Aorta (tissue), 5 donors: ENCODE measurements at regions of chr7 and their contacts with region 1.

Region 1: GRCh38 chr7:18086165-18087030 is 58.8 kb upstream of the PRPS1L1 start:
- DNase-seq: peak; percentile 66 to 89
- ATAC-seq: peak; percentile 61
- H3K4me3 ChIP-seq: peak overlapping the region; percentile 79 to 81
- H3K27ac ChIP-seq: no peak overlapping the region
- H3K4me1 ChIP-seq: no peaks in the 10 kb centered on the region
- H3K27me3 ChIP-seq: no peaks in the 10 kb centered on the region

Region 2: GRCh38 chr7:18128846-18129245 is 42.4 kb after region 1 on chr7:
- intact Hi-C with region 1: no loop called
- DNase-seq: no peak
- ATAC-seq: no peak
- H3K4me3 ChIP-seq: no peak overlapping the region
- H3K27ac ChIP-seq: no peak overlapping the region
- H3K4me1 ChIP-seq: peaks cover 0 to under 1% of the 10 kb centered on the region in 2 donors
- H3K27me3 ChIP-seq: no peaks in the 10 kb centered on the region

Region 3: DNA sequence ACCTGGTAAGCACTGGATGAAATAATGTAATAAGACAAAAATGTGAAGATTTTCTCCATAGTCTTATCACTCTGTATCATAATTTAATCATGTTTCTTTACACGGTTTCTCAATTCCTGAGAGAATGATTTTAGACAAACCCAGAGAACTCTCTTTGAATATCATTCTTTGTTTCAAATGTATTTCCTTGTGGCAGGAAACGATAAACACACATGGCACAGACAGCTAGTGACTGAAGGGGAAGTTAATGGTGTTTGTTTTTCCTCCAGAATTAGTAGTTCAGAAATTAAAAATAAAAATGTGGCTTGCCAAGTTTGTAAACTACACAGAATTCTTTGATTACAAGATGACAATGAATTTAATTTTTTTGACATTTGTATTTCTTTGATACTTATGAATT is 104.9 kb after region 1 on chr7:
- intact Hi-C with region 1: loop called in 1 of 2 experiments (anchors 10 kb)
- DNase-seq: no peak
- ATAC-seq: no peak
- H3K4me3 ChIP-seq: no peak overlapping the region
- H3K27ac ChIP-seq: no peak overlapping the region
- H3K4me1 ChIP-seq: no peaks in the 10 kb centered on the region
- H3K27me3 ChIP-seq: no peaks in the 10 kb centered on the region

Region 4: GRCh38 chr7:18221377-18222293 is 135.2 kb after region 1 on chr7:
- intact Hi-C with region 1: loop called in 1 of 2 experiments (anchors 10 kb)
- DNase-seq: no peak
- ATAC-seq: no peak
- H3K4me3 ChIP-seq: no peak overlapping the region
- H3K27ac ChIP-seq: no peak overlapping the region
- H3K4me1 ChIP-seq: peaks cover 0 to 2% of the 10 kb centered on the region in 2 donors
- H3K27me3 ChIP-seq: no peaks in the 10 kb centered on the region

Region 5: GRCh38 chr7:18305866-18306265 is 219.5 kb after region 1 on chr7:
- intact Hi-C with region 1: loop called in 1 of 2 experiments (anchors 5 kb)
- DNase-seq: no peak
- ATAC-seq: no peak
- H3K4me3 ChIP-seq: no peak overlapping the region
- H3K27ac ChIP-seq: peak overlapping the region in 1 of 2 donors; percentile 17
- H3K4me1 ChIP-seq: peaks cover 0 to 2% of the 10 kb centered on the region in 2 donors
- H3K27me3 ChIP-seq: no peaks in the 10 kb centered on the region

Region 6: GRCh38 chr7:18337048-18337809 is 250.8 kb after region 1 on chr7:
- intact Hi-C with region 1: loop called in 1 of 2 experiments (anchors 10 kb)
- DNase-seq: peak in 1 of 2 donors; percentile 34
- ATAC-seq: no peak
- H3K4me3 ChIP-seq: no peak overlapping the region
- H3K27ac ChIP-seq: no peak overlapping the region
- H3K4me1 ChIP-seq: no peaks in the 10 kb centered on the region
- H3K27me3 ChIP-seq: no peaks in the 10 kb centered on the region